ENCODE measurements at regions of chr9 and their contacts with region 1.

Region 1: GRCh38 chr9:121640076-121640475 is 11.4 kb upstream of the DAB2IP start:
- DNase-seq: peak; percentile 76
- ATAC-seq: peak; percentile 75
- H3K4me3 Mint-ChIP-seq: no peak overlapping the region
- H3K27ac Mint-ChIP-seq: 0 out of 2 replicates have a peak overlapping the region, but pooled peaks have one; percentile 23
- H3K4me1 Mint-ChIP-seq: peaks cover 40% of the 10 kb centered on the region
- H3K27me3 Mint-ChIP-seq: no peaks in the 10 kb centered on the region
- CTCF ChIP-seq: no peak; the same call in 1 of the 2 replicates

Region 2: DNA sequence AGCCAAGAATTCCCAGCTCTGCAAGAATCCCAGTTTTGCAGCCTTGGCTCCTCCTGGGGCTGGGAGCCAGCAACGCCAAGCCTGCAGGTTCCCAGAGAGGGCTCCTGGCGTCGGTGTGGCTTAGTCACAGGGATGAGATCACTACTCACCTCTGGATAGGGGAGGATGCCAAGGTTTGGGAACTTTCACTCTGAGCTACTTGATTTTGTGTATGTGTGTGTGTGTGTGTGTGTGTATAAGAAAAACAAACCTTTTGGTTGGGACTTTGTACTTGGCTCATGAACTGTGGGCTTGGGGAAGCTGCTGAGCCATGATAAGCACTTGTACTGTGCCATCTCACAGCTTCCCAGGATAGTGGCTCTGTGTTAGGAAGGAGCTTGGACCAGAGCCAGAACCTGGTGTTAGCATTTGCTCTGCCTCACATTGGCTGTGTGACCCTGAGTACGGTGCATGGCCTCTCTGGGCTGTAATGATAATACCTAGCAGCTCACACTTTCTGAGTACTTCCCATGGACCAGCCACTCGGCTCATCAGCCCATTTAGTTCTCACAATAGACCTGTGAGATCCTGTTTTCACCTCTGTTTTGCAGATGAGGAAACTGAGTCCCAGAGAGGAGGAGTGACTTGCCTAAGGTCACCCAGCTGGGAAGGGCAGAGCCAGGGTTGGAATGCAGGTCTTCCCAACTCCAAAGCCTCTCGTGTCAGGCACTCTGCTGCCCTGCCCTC is 30.1 kb before region 1 on chr9:
- CTCF ChIA-PET with region 1: interaction called, 10 read pairs
- POLR2A ChIA-PET with region 1: no interaction called
- DNase-seq: no peak
- ATAC-seq: no peak
- H3K4me3 Mint-ChIP-seq: no peak overlapping the region
- H3K27ac Mint-ChIP-seq: no peak overlapping the region
- H3K4me1 Mint-ChIP-seq: peaks cover 36% of the 10 kb centered on the region
- H3K27me3 Mint-ChIP-seq: no peaks in the 10 kb centered on the region
- CTCF ChIP-seq: no peak

Region 3: GRCh38 chr9:121650217-121651007 is 10.3 kb after region 1 on chr9:
- CTCF ChIA-PET with region 1: interaction called, 23 read pairs
- POLR2A ChIA-PET with region 1: no interaction called
- DNase-seq: peak; percentile 89
- ATAC-seq: peak; percentile 62
- H3K4me3 Mint-ChIP-seq: peak overlapping the region; percentile 79
- H3K27ac Mint-ChIP-seq: peak overlapping the region; percentile 78; the same call in 1 of the 2 replicates
- H3K4me1 Mint-ChIP-seq: peaks cover 73% of the 10 kb centered on the region
- H3K27me3 Mint-ChIP-seq: peaks cover 9% of the 10 kb centered on the region; the same call in 1 of the 2 replicates
- CTCF ChIP-seq: no peak

Region 4: GRCh38 chr9:121662891-121663580 is 23.0 kb after region 1 on chr9:
- CTCF ChIA-PET with region 1: interaction called, 12 read pairs
- POLR2A ChIA-PET with region 1: no interaction called
- DNase-seq: no peak
- ATAC-seq: peak; percentile 73
- H3K4me3 Mint-ChIP-seq: no peak overlapping the region
- H3K27ac Mint-ChIP-seq: no peak overlapping the region
- H3K4me1 Mint-ChIP-seq: peaks cover 25% of the 10 kb centered on the region
- H3K27me3 Mint-ChIP-seq: no peaks in the 10 kb centered on the region
- CTCF ChIP-seq: no peak

Region 5: DNA sequence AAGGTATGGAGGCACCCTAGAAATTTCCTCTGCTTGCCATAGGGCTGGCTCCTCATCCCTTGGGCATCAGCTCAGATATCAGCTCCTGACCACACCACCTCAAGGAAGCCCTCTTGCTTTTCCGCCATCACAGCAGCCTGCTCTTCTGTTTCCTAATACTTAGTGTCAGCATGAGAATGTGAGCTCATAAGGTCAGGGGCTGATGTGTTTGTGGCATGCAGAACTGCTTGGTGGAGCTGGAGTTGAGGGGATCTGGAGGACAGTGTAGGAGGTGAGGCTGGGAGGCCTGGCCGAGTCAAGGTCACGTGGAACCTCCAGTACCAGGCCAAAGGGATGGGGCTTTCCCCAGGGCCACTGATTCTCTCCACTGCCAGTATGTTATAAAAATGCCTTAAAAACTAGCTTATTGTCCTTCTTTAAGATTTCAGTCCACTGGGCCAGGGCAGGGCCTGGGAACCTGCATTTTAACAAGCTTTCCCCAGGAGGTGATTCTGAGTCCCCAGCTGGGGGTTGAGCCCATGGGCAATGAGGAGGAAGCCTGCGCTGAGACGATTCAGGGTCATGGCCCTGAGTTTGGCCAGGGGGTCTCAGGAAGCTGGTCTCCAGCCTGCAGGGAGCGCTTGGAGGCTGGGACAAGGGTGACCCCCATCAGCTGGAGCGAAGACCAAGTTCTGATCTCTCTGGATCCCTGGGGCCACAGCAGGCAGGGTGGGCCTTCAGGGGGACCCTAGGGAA is 40.0 kb after region 1 on chr9:
- CTCF ChIA-PET with region 1: interaction called, 115 read pairs
- POLR2A ChIA-PET with region 1: no interaction called
- DNase-seq: no peak
- ATAC-seq: no peak
- H3K4me3 Mint-ChIP-seq: no peak overlapping the region
- H3K27ac Mint-ChIP-seq: no peak overlapping the region
- H3K4me1 Mint-ChIP-seq: peaks cover 4% of the 10 kb centered on the region
- H3K27me3 Mint-ChIP-seq: no peaks in the 10 kb centered on the region
- CTCF ChIP-seq: no peak

Region 6: GRCh38 chr9:121989010-121989409 is 348.9 kb after region 1 on chr9:
- CTCF ChIA-PET with region 1: interaction called, 17 read pairs
- POLR2A ChIA-PET with region 1: no interaction called
- DNase-seq: peak; percentile 76
- ATAC-seq: peak; percentile 94
- H3K4me3 Mint-ChIP-seq: no peak overlapping the region
- H3K27ac Mint-ChIP-seq: no peak overlapping the region
- H3K4me1 Mint-ChIP-seq: no peaks in the 10 kb centered on the region
- H3K27me3 Mint-ChIP-seq: peaks cover 17% of the 10 kb centered on the region
- CTCF ChIP-seq: no peak